Psoas muscle (tissue), 8 donors: ENCODE measurements at regions of chr16 and their contacts with region 1.

Region 1: GRCh38 chr16:2023098-2023925 is 3.4 kb upstream of the NHERF2 start:
- DNase-seq: peak; percentile 93 to 96
- ATAC-seq: peak; percentile 88 to 94 (median 92)
- H3K4me3 ChIP-seq: peak overlapping the region; percentile 46
- H3K27ac ChIP-seq: peak overlapping the region; percentile 52
- H3K4me1 ChIP-seq: peaks cover 24% of the 10 kb centered on the region
- H3K27me3 ChIP-seq: peaks cover 0 to 27% (median 16%) of the 10 kb centered on the region in 3 donors
- CTCF ChIP-seq: peak; percentile 96

Region 2: GRCh38 chr16:1971796-1972489 is 51.4 kb before region 1 on chr16 and contains the start of gene TBL3:
- intact Hi-C with region 1: no loop called
- DNase-seq: peak; percentile 94 to 97
- ATAC-seq: peak; percentile 94 to 97 (median 94)
- H3K4me3 ChIP-seq: peak within 1 kb of the TSS; percentile 100
- H3K27ac ChIP-seq: peak within 1 kb of the TSS; percentile 98
- H3K4me1 ChIP-seq: peaks cover 20% of the 10 kb centered on the region
- H3K27me3 ChIP-seq: no peaks in the 10 kb centered on the region
- CTCF ChIP-seq: no peak
- total RNA-seq, gene TBL3: 31.5 to 41.8 (median 40.7) TPM

Region 3: GRCh38 chr16:1983544-1984346 is 39.6 kb before region 1 on chr16 and contains the start of gene GFER:
- intact Hi-C with region 1: no loop called
- DNase-seq: peak; percentile 91 to 95
- ATAC-seq: peak; percentile 89 to 92 (median 90)
- H3K4me3 ChIP-seq: peak within 1 kb of the TSS; percentile 93
- H3K27ac ChIP-seq: peak within 1 kb of the TSS; percentile 67
- H3K4me1 ChIP-seq: peaks cover 32% of the 10 kb centered on the region
- H3K27me3 ChIP-seq: peaks cover 0 to 8% (median 4%) of the 10 kb centered on the region in 3 donors
- CTCF ChIP-seq: peak; percentile 41
- total RNA-seq, gene GFER: 18.9 to 34.2 (median 28.4) TPM

Region 4: GRCh38 chr16:2071454-2072202 is 48.3 kb after region 1 on chr16:
- intact Hi-C with region 1: loop called in 1 of 2 experiments (anchors 1 kb)
- DNase-seq: no peak
- ATAC-seq: peak in 1 of 4 donors; percentile 16
- H3K4me3 ChIP-seq: no peak overlapping the region
- H3K27ac ChIP-seq: no peak overlapping the region
- H3K4me1 ChIP-seq: no peaks in the 10 kb centered on the region
- H3K27me3 ChIP-seq: no peaks in the 10 kb centered on the region
- CTCF ChIP-seq: no peak

Region 5: GRCh38 chr16:2142942-2143877 is 119.9 kb after region 1 on chr16:
- intact Hi-C with region 1: loop called in 1 of 2 experiments (anchors 2 kb)
- DNase-seq: no peak
- ATAC-seq: no peak
- H3K4me3 ChIP-seq: no peak overlapping the region
- H3K27ac ChIP-seq: no peak overlapping the region
- H3K4me1 ChIP-seq: peaks cover 17% of the 10 kb centered on the region
- H3K27me3 ChIP-seq: no peaks in the 10 kb centered on the region
- CTCF ChIP-seq: no peak